Gastrocnemius medialis (tissue), 4 donors: ENCODE measurements at regions of chr19 and their contacts with region 1.

Region 1: DNA sequence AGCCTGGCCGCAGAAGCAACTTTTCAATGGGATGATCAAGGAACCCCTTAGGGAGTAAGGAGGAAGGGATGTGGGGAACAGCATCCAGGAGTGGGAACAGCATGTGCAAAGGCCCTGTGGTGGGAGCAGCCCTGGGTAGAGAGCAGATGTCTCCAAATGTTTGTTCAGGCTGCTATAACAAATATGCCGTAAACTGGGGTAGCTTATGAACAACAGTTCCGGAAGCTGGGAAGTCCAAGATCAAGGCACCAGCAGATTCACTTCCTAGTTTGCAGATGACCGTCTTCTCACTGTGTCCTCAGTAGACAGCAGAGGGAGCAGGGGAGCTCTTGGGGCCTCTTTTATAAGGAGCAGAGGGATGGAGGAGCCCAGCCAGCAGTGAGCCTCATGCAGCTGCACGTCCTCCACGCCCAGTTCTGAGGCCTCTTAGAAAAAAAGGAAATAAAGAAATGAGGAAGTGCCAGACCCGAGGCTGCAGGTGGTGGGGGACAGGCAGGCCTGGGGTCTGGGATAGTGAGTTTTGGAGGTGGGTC is 4.2 kb upstream of the LRRC25 start:
- DNase-seq: peak; percentile 63 to 68
- ATAC-seq: peak; percentile 55 to 76
- H3K4me3 ChIP-seq: no peak overlapping the region
- H3K27ac ChIP-seq: no peak overlapping the region
- H3K4me1 ChIP-seq: peaks cover 0 to 3% of the 10 kb centered on the region in 2 donors
- H3K27me3 ChIP-seq: no peaks in the 10 kb centered on the region
- CTCF ChIP-seq: peak in 1 of 5 experiments; percentile 21
- POLR2A ChIP-seq: no peak

Region 2: DNA sequence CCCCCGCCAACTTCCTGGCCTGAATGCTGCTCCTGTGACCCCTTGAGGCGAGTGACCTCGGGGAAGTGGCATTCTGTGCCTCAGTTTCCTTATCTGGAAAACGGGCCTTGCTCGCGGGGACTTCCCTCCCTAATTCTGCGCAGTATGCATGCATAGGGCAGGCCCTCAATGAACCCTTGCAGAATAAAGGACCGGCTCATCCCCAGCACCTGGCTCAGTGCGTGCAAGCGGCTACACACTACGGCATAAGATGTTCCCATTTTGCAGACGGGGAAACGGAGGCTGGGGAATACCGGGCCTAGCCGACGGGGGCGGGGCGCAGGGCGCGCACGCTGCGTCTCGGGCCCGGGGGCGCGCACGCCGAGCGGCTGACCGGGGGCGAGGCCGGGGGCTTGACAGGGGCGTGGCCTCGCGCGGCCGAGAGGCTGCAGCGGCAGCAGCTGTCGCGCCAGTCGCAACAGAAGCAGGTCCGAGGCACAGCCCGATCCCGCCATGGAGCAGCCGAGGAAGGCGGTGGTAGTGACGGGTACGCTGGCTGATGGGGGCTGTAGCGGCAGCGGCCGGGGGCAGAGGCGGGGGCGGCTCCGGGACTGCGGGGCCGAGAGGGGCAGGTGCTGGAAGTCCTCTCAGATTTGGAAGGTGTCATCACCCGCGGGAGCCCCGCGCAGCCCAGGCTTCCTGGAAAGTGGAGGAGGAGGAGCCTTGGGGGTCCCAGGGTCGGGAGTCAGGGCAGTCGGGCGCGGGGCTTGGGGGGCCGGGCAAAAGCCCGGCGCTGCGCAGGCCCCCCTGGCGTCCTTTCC is 61.3 kb before region 1 on chr19 and contains the start of gene PGPEP1:
- in situ Hi-C with region 1: loop called in 1 of 4 experiments (anchors 10 kb)
- intact Hi-C with region 1: no loop called
- DNase-seq: peak; percentile 31 to 74
- ATAC-seq: peak; percentile 38 to 55
- H3K4me3 ChIP-seq: peak within 1 kb of the TSS; percentile 71 to 91 (median 84)
- H3K27ac ChIP-seq: peak within 1 kb of the TSS; percentile 87 to 92 (median 88)
- H3K4me1 ChIP-seq: peaks cover 0 to 5% of the 10 kb centered on the region in 2 donors
- H3K27me3 ChIP-seq: no peaks in the 10 kb centered on the region
- CTCF ChIP-seq: no peak
- POLR2A ChIP-seq: peak; percentile 78 to 87
- total RNA-seq, gene PGPEP1: 11.7 to 42.3 (median 23.6) TPM

Region 3: GRCh38 chr19:18373892-18374629 is 27.6 kb before region 1 on chr19:
- in situ Hi-C with region 1: no loop called
- intact Hi-C with region 1: no loop called
- DNase-seq: peak; percentile 88 to 94
- ATAC-seq: peak; percentile 90 to 91
- H3K4me3 ChIP-seq: peak overlapping the region in 1 of 4 donors; percentile 10
- H3K27ac ChIP-seq: peak overlapping the region; percentile 76 to 87 (median 84)
- H3K4me1 ChIP-seq: peaks cover 7 to 8% of the 10 kb centered on the region in 2 donors
- H3K27me3 ChIP-seq: no peaks in the 10 kb centered on the region
- CTCF ChIP-seq: no peak
- POLR2A ChIP-seq: peak in 1 of 2 donors; percentile 40